ENCODE measurements at regions of chr4 and their contacts with region 1.

Region 1: GRCh38 chr4:122602277-122603142 is 18.4 kb downstream of the IL21 start:
- DNase-seq: no peak
- H3K4me3 Mint-ChIP-seq: no peak overlapping the region
- H3K27ac Mint-ChIP-seq: no peak overlapping the region
- H3K4me1 Mint-ChIP-seq: peaks cover 12% of the 10 kb centered on the region
- H3K27me3 Mint-ChIP-seq: no peaks in the 10 kb centered on the region

Region 2: DNA sequence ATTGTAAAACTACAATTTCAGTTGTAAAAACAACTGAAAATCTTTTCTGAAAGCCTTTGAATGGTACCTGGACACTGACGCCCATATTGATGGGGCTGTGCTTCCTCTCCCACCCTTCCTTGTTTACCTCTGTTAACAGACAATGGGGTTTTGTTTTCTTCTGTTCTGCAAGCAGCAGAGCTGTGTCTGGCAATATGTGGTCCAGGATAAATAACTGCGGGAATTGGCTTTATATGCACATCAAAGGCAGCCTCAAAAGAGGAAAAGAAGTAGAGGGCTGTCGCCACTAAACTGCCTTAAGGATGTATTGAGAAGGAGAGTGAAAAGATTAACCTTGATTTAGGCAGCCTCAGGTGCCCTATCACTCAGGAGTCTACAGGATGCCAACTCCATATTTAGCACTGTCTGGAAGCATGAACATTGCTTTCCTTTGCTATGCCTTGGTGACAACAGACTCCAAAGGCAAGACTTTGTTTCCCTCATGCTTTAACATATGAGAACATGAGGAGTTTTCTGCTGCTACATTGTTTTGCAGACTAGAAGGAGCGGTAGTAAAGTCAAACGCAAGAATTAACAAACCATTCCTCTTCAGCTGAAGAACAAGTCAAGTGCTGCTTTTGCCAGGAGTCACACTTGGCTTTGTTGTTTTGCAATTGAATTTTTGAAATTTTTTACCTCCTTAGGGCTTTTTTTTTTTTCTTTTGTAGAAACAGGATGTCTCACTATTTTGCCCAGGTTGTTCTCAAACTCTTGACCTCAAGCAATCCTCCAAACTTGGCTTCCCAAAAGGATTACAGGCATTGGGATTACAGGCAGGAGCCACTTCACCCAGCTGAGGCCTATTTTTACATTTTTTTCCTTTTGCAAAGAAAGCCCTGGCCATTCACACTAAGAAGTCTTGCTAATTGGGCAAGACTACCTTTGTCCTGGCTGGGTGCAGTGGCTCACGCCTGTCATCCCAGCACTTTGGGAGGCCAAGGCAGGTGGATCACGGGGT is 15.4 kb after region 1 on chr4:
- CTCF ChIA-PET with region 1: interaction called, 30 read pairs
- DNase-seq: no peak
- H3K4me3 Mint-ChIP-seq: peak overlapping the region; percentile 0
- H3K27ac Mint-ChIP-seq: peak overlapping the region; percentile 59
- H3K4me1 Mint-ChIP-seq: peaks cover 49% of the 10 kb centered on the region
- H3K27me3 Mint-ChIP-seq: no peaks in the 10 kb centered on the region

Region 3: GRCh38 chr4:122716825-122717448 is 114.4 kb after region 1 on chr4:
- CTCF ChIA-PET with region 1: interaction called, 92 read pairs
- DNase-seq: peak; percentile 84
- H3K4me3 Mint-ChIP-seq: no peak overlapping the region
- H3K27ac Mint-ChIP-seq: no peak overlapping the region
- H3K4me1 Mint-ChIP-seq: peaks cover 33% of the 10 kb centered on the region
- H3K27me3 Mint-ChIP-seq: peaks cover 8% of the 10 kb centered on the region

Region 4: DNA sequence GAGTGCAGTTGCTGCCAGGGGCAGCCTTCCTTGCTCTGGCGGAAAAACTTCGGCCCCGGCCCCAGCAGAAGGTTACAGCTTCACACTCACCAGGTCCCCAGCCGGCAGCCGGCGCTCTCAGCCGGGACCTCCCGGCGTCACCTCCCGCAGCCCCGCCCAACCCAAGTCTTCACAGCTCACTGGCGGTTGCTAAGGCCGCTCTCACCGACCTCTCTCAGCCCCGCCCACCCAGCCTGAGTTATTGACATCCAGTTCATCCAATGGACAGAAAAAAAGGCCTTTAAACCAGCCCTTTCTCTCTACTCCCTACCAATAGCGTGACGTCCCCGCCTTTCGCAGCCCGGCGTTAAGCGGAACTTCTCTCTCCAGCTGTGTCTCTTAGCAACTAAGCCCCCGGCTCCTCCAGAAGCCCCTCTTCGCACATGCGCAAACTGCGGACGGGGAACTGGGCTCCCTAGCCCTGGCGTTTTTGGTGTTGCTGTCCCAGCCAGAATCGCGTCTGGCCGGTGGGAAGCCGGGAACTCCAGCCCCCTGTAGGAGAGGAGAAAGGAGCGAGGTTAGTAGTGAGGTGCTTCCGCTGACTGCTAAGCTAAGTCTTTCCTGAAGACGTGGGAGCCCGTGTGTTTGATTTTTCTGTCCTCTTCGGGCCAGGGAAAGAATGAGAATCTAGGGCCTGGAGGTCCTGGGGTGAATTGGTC is 130.0 kb after region 1 on chr4 and contains the start of gene BBS12:
- CTCF ChIA-PET with region 1: interaction called, 15 read pairs
- DNase-seq: peak; percentile 99
- H3K4me3 Mint-ChIP-seq: peak within 1 kb of the TSS; percentile 91
- H3K27ac Mint-ChIP-seq: peak within 1 kb of the TSS; percentile 93
- H3K4me1 Mint-ChIP-seq: peaks cover 24% of the 10 kb centered on the region
- H3K27me3 Mint-ChIP-seq: no peaks in the 10 kb centered on the region

Region 5: GRCh38 chr4:122930862-122931261 is 328.4 kb after region 1 on chr4:
- CTCF ChIA-PET with region 1: interaction called, 21 read pairs
- DNase-seq: no peak
- H3K4me3 Mint-ChIP-seq: no peak overlapping the region
- H3K27ac Mint-ChIP-seq: no peak overlapping the region
- H3K4me1 Mint-ChIP-seq: peaks cover 30% of the 10 kb centered on the region
- H3K27me3 Mint-ChIP-seq: no peaks in the 10 kb centered on the region

Region 6: DNA sequence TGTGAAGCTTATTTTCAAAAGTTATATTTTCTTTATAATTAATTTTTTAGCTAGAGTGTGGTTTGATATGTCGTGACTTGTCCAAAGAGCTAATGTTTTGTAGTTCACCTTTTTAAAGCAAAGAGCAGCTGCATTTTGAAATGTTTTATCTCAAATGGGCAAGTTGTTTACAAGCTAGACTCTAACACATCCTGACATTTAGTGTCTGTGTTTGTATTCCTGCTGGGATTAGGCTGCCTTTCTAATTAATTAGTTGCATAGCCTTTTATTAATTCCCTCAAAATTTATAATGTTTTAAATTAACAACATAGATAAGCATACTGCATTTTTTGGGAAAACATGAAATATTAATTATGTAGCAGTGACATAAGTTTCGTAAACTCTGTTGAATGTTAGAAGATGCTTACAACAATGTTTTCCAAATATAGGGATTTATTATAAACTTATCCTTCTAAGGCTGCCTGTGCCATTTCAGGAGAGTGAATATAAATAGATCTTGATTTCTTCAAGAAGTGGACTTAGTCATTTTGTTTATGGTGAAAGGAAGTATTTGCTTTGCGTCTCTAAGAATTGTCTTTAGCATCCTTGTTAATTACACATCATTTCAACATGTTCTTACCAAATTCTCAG is 357.6 kb after region 1 on chr4:
- CTCF ChIA-PET with region 1: no interaction called
- DNase-seq: no peak
- H3K4me3 Mint-ChIP-seq: no peak overlapping the region
- H3K27ac Mint-ChIP-seq: no peak overlapping the region
- H3K4me1 Mint-ChIP-seq: no peaks in the 10 kb centered on the region
- H3K27me3 Mint-ChIP-seq: no peaks in the 10 kb centered on the region